B cell (primary cell): ENCODE measurements at regions of chr15 and their contacts with region 1.

Region 1: DNA sequence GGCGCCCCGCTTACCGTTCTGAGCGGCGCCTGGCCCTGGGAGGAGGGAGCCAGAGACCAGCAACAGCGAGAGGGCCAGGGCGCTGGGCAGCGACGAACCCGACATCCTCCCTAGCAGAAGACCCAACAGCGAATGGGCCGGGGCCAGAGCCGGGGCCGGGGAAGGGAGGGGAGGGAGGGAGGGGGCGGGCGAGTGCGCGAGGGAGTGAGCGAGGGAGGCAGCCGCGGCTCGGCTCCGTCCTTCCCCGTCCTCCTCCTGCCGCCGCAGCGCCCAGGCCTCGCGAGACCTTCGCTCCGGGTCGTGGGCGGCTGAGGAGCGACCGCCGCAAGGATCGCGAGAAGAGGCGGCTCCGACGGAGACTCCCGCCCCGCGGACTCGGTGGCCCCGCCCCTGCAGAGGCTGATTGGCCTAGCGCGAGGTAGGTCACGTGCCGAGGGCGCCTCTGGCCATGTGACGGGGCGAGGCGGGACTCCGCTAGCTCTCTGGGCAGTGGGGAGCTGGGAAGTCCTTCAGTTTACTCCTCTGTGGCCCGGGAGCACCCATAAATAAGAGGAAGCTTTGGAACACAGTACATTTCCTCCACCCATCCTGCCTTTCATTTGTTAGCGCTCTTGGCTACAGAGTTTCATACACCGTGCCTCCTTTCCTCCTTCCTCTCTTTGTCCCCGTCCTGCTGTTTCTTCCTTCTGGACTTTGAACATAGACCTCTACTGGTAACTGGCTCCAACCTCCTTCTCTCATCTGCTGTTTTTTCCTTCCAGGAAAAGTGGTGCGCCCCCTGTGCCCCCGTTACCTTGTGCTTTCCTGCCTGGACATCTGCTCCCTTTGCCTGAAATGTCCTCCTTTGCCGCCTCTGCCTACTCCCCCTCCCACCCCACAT is at the start of gene NPTN:
- DNase-seq: peak; percentile 97
- ATAC-seq: peak; percentile 90
- H3K4me3 ChIP-seq: peak within 1 kb of the TSS; percentile 53 to 85 (median 76)
- H3K4me3 Mint-ChIP-seq: peak within 1 kb of the TSS; percentile 87
- H3K27ac ChIP-seq: peak within 1 kb of the TSS; percentile 50 to 72
- H3K27ac Mint-ChIP-seq: peak within 1 kb of the TSS; percentile 81
- H3K4me1 ChIP-seq: peaks cover 32 to 34% of the 10 kb centered on the region in 2 donors
- H3K4me1 Mint-ChIP-seq: peaks cover 55% of the 10 kb centered on the region
- H3K27me3 ChIP-seq: peaks cover 0 to 4% (median 0%) of the 10 kb centered on the region in 4 experiments
- H3K27me3 Mint-ChIP-seq: no peaks in the 10 kb centered on the region
- CTCF ChIP-seq: no peak
- total RNA-seq, gene NPTN: 40.2 and 40.5 TPM in 2 replicates

Region 2: GRCh38 chr15:72375847-72376581 is 1257.3 kb before region 1 on chr15 and contains the start of gene HEXA:
- CTCF ChIA-PET with region 1: no interaction called
- POLR2A ChIA-PET with region 1: no interaction called
- intact Hi-C with region 1: loop called (anchors 10 kb)
- DNase-seq: peak; percentile 98
- ATAC-seq: peak; percentile 85
- H3K4me3 ChIP-seq: peak within 1 kb of the TSS; percentile 72 to 92 (median 85)
- H3K4me3 Mint-ChIP-seq: peak within 1 kb of the TSS; percentile 98
- H3K27ac ChIP-seq: peak within 1 kb of the TSS; percentile 85 to 95
- H3K27ac Mint-ChIP-seq: peak within 1 kb of the TSS; percentile 100
- H3K4me1 ChIP-seq: peaks cover 44 to 46% of the 10 kb centered on the region in 2 donors
- H3K4me1 Mint-ChIP-seq: peaks cover 54% of the 10 kb centered on the region
- H3K27me3 ChIP-seq: no peaks in the 10 kb centered on the region
- H3K27me3 Mint-ChIP-seq: no peaks in the 10 kb centered on the region
- CTCF ChIP-seq: no peak
- total RNA-seq, gene HEXA: 151 and 154 TPM in 2 replicates

Region 3: DNA sequence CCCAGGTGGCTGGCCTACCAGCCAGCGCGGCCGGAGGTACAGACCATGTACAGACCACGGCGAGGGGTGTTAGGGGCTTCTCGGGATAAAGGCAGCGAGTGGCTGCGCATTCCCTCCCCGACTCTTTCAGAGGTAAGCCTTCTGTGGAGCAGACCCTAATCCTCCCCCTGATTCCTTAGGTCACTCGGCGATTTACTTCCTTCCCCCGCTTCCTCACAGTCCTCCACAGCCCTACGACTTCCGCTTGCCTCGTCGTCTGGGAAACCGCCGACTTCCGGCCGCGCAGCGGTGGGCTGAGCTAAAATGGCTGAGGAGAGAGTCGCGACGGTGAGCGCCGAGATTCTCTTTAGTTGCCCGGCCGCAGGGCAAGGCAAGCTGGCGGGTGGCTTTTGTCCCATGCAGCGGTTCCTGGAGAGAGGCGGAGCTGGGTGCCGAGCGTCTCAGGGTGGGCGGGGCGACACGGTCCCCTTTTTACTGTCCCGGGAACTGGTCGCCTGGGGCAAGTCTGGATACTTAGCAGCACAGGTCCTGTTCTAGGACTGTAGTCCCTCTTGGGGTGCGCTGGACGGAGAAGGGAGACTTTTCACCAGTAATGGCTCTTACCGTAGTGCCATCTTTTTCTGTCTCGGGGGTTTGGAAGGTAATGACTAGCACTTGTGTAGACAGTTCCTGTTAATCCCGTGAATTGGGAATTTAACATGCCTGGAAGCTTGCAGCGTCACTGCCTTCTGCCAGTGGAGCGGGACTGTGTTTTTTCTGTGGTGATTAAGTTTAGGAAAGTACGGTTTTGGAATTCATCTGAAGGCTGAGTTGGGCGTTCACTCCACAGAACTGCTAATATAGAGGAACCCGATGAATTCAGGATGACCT is 947.2 kb before region 1 on chr15 and contains the starts of genes BBS4 and HIGD2B:
- CTCF ChIA-PET with region 1: no interaction called
- POLR2A ChIA-PET with region 1: no interaction called
- intact Hi-C with region 1: loop called (anchors 5 kb)
- DNase-seq: peak; percentile 91
- ATAC-seq: peak; percentile 94
- H3K4me3 ChIP-seq: peak within 1 kb of the TSS; percentile 70 to 98 (median 88)
- H3K4me3 Mint-ChIP-seq: peak within 1 kb of the TSS; percentile 97
- H3K27ac ChIP-seq: peak within 1 kb of the TSS; percentile 77 to 91
- H3K27ac Mint-ChIP-seq: peak within 1 kb of the TSS; percentile 94
- H3K4me1 ChIP-seq: peaks cover 11 to 12% of the 10 kb centered on the region in 2 donors
- H3K4me1 Mint-ChIP-seq: peaks cover 25% of the 10 kb centered on the region
- H3K27me3 ChIP-seq: no peaks in the 10 kb centered on the region
- H3K27me3 Mint-ChIP-seq: no peaks in the 10 kb centered on the region
- CTCF ChIP-seq: no peak
- total RNA-seq, gene BBS4: 25.7 and 34.9 TPM in 2 replicates
- total RNA-seq, gene HIGD2B: 0.52 and 1.4 TPM in 2 replicates

Region 4: GRCh38 chr15:73284090-73284716 is 349.1 kb before region 1 on chr15:
- CTCF ChIA-PET with region 1: interaction called, 5 read pairs
- POLR2A ChIA-PET with region 1: no interaction called
- intact Hi-C with region 1: loop called (anchors 2 kb)
- DNase-seq: peak; percentile 13
- ATAC-seq: no peak
- H3K4me3 ChIP-seq: no peak overlapping the region
- H3K4me3 Mint-ChIP-seq: no peak overlapping the region
- H3K27ac ChIP-seq: no peak overlapping the region
- H3K27ac Mint-ChIP-seq: no peak overlapping the region
- H3K4me1 ChIP-seq: peaks cover 10 to 22% of the 10 kb centered on the region in 2 donors
- H3K4me1 Mint-ChIP-seq: peaks cover 23% of the 10 kb centered on the region
- H3K27me3 ChIP-seq: no peaks in the 10 kb centered on the region
- H3K27me3 Mint-ChIP-seq: no peaks in the 10 kb centered on the region
- CTCF ChIP-seq: peak; percentile 20

Region 5: GRCh38 chr15:73601451-73602445 is 31.6 kb before region 1 on chr15:
- CTCF ChIA-PET with region 1: interaction called, 12 read pairs
- POLR2A ChIA-PET with region 1: no interaction called
- intact Hi-C with region 1: no loop called
- DNase-seq: no peak
- ATAC-seq: no peak
- H3K4me3 ChIP-seq: no peak overlapping the region
- H3K4me3 Mint-ChIP-seq: no peak overlapping the region
- H3K27ac ChIP-seq: no peak overlapping the region
- H3K27ac Mint-ChIP-seq: no peak overlapping the region
- H3K4me1 ChIP-seq: peaks cover 3 to 8% of the 10 kb centered on the region in 2 donors
- H3K4me1 Mint-ChIP-seq: peaks cover 31% of the 10 kb centered on the region
- H3K27me3 ChIP-seq: no peaks in the 10 kb centered on the region
- H3K27me3 Mint-ChIP-seq: no peaks in the 10 kb centered on the region
- CTCF ChIP-seq: no peak

Region 6: DNA sequence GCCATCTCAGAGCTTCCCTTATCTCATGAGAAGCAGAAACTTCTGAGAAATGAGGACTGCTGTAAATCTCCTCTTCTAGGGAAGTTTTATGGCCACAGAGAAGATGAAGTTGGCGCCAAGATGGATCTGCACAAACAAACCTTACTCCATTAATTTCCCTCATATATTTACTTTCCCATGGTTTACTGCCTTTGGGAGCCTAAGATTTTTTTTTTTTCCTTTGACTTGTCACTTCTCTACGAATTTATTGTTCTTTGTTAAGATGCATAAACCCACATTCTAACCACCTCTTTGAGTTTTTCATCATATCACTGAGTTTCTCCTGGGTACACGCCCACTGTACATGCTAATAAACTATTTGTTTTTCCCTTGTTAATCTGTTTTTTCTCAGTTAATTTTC is 21.3 kb after region 1 on chr15:
- CTCF ChIA-PET with region 1: no interaction called
- POLR2A ChIA-PET with region 1: no interaction called
- intact Hi-C with region 1: no loop called
- DNase-seq: no peak
- ATAC-seq: no peak
- H3K4me3 ChIP-seq: no peak overlapping the region
- H3K4me3 Mint-ChIP-seq: no peak overlapping the region
- H3K27ac ChIP-seq: no peak overlapping the region
- H3K27ac Mint-ChIP-seq: no peak overlapping the region
- H3K4me1 ChIP-seq: no peaks in the 10 kb centered on the region
- H3K4me1 Mint-ChIP-seq: no peaks in the 10 kb centered on the region
- H3K27me3 ChIP-seq: peaks cover 0 to 2% (median 0%) of the 10 kb centered on the region in 4 experiments
- H3K27me3 Mint-ChIP-seq: peaks cover 33% of the 10 kb centered on the region
- CTCF ChIP-seq: no peak

Region 7: DNA sequence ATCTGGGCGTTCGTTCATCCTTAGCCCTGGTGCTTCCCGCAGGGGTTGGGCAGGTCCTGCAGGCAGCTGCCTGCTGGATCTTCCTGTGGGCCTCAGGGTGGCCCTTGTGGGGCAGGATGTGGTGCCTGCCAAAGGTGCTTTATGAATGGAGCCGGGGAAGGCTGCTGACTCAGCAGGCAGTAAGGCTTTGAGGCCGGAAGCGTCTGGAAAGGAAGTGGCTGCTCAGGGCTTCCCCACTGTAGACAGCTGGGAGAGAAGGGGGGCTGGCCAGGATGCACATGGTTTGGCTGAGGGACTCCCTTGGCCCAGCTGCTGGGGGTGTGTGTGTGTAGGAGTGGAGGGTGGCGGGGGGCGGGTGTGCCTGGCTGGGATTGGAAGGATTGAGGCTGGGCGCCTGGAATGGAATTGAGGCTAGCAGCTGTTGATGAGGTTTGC is 63.7 kb after region 1 on chr15:
- CTCF ChIA-PET with region 1: interaction called, 13 read pairs
- POLR2A ChIA-PET with region 1: no interaction called
- intact Hi-C with region 1: loop called (anchors 2 kb)
- DNase-seq: peak; percentile 31
- ATAC-seq: peak; percentile 43
- H3K4me3 ChIP-seq: no peak overlapping the region
- H3K4me3 Mint-ChIP-seq: no peak overlapping the region
- H3K27ac ChIP-seq: no peak overlapping the region
- H3K27ac Mint-ChIP-seq: no peak overlapping the region
- H3K4me1 ChIP-seq: peaks cover 6 to 7% of the 10 kb centered on the region in 2 donors
- H3K4me1 Mint-ChIP-seq: peaks cover 9% of the 10 kb centered on the region
- H3K27me3 ChIP-seq: peaks cover 0 to 40% (median 6%) of the 10 kb centered on the region in 4 experiments
- H3K27me3 Mint-ChIP-seq: peaks cover 55% of the 10 kb centered on the region
- CTCF ChIP-seq: no peak

Region 8: GRCh38 chr15:73751899-73752815 is 118.8 kb after region 1 on chr15:
- CTCF ChIA-PET with region 1: no interaction called
- POLR2A ChIA-PET with region 1: no interaction called
- intact Hi-C with region 1: no loop called
- DNase-seq: no peak
- ATAC-seq: no peak
- H3K4me3 ChIP-seq: no peak overlapping the region
- H3K4me3 Mint-ChIP-seq: no peak overlapping the region
- H3K27ac ChIP-seq: no peak overlapping the region
- H3K27ac Mint-ChIP-seq: no peak overlapping the region
- H3K4me1 ChIP-seq: no peaks in the 10 kb centered on the region
- H3K4me1 Mint-ChIP-seq: peaks cover 5% of the 10 kb centered on the region
- H3K27me3 ChIP-seq: peaks cover 0 to 34% (median 3%) of the 10 kb centered on the region in 4 experiments
- H3K27me3 Mint-ChIP-seq: peaks cover 48% of the 10 kb centered on the region
- CTCF ChIP-seq: no peak

Region 9: GRCh38 chr15:74540761-74541493 is 907.6 kb after region 1 on chr15 and contains the start of gene ARID3B:
- CTCF ChIA-PET with region 1: no interaction called
- POLR2A ChIA-PET with region 1: no interaction called
- intact Hi-C with region 1: loop called (anchors 5 kb)
- DNase-seq: peak; percentile 96
- ATAC-seq: peak; percentile 90
- H3K4me3 ChIP-seq: peak within 1 kb of the TSS; percentile 79 to 100 (median 93)
- H3K4me3 Mint-ChIP-seq: peak within 1 kb of the TSS; percentile 99
- H3K27ac ChIP-seq: peak within 1 kb of the TSS; percentile 77
- H3K27ac Mint-ChIP-seq: peak within 1 kb of the TSS; percentile 97
- H3K4me1 ChIP-seq: peaks cover 26 to 41% of the 10 kb centered on the region in 2 donors
- H3K4me1 Mint-ChIP-seq: peaks cover 46% of the 10 kb centered on the region
- H3K27me3 ChIP-seq: no peaks in the 10 kb centered on the region
- H3K27me3 Mint-ChIP-seq: no peaks in the 10 kb centered on the region
- CTCF ChIP-seq: no peak
- total RNA-seq, gene ARID3B: 30.9 and 31.0 TPM in 2 replicates